Dendritic cell treated with granulocyte-macrophage colony-stimulating factor and Interleukin-4, amounts not matched to agents 40 ng/mL and 50 ng/mL, for 4 days (primary cell): ENCODE measurements at regions of chr5 and their contacts with region 1.

Region 1: GRCh38 chr5:115475788-115476187 is 68.8 kb downstream of the FEM1C start:
- H3K4me3 Mint-ChIP-seq: no peak overlapping the region
- H3K27ac Mint-ChIP-seq: peak overlapping the region; percentile 89
- H3K4me1 Mint-ChIP-seq: peaks cover 79% of the 10 kb centered on the region
- H3K27me3 Mint-ChIP-seq: no peaks in the 10 kb centered on the region

Region 2: GRCh38 chr5:115398719-115399118 is 77.1 kb before region 1 on chr5:
- intact Hi-C with region 1: no loop called
- H3K4me3 Mint-ChIP-seq: no peak overlapping the region
- H3K27ac Mint-ChIP-seq: no peak overlapping the region
- H3K4me1 Mint-ChIP-seq: no peaks in the 10 kb centered on the region
- H3K27me3 Mint-ChIP-seq: peaks cover 10% of the 10 kb centered on the region

Region 3: GRCh38 chr5:115435778-115436712 is 39.7 kb before region 1 on chr5:
- intact Hi-C with region 1: no loop called
- H3K4me3 Mint-ChIP-seq: no peak overlapping the region
- H3K27ac Mint-ChIP-seq: no peak overlapping the region
- H3K4me1 Mint-ChIP-seq: peaks cover 5% of the 10 kb centered on the region
- H3K27me3 Mint-ChIP-seq: peaks cover 18% of the 10 kb centered on the region

Region 4: DNA sequence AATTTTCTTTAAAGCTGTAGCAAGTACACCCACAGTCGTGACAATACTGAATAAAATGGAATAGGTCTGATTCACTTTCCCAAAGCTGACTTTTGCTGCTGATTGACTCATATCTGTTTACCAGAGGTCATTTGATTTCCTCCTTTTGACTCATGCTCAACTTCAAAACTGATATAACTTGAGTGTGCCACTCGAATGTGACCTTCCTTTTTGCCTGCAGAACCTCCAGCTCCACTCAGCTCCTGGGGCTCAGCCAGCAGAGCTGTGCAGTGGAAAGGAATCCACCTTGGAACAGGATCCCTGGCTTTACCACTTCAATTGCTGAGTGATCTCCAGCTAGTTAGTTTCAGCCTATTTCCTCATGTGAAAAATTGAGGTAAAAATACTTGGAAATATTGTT is 15.3 kb before region 1 on chr5:
- intact Hi-C with region 1: loop called (anchors 2 kb)
- H3K4me3 Mint-ChIP-seq: no peak overlapping the region
- H3K27ac Mint-ChIP-seq: no peak overlapping the region
- H3K4me1 Mint-ChIP-seq: peaks cover 3% of the 10 kb centered on the region
- H3K27me3 Mint-ChIP-seq: no peaks in the 10 kb centered on the region

Region 5: DNA sequence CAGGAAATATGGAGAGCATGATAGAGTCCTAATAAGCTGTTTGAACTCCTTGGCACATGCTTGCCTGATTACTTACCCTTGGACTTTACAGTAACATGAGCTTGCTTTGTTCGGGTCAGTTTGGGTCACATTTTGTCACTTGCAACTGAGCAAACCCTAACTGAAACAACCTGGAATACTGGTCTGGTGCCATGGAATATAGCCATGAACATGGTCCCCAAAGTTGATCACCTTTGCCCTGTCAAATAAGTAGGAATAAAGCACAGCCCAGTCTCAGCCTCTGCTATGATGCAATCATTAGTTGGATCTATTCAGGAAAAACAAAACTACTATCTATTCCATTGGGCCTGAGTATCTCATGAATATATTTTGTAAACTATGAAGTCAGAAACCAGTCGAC is 322.5 kb after region 1 on chr5:
- intact Hi-C with region 1: no loop called
- H3K4me3 Mint-ChIP-seq: no peak overlapping the region
- H3K27ac Mint-ChIP-seq: no peak overlapping the region
- H3K4me1 Mint-ChIP-seq: no peaks in the 10 kb centered on the region
- H3K27me3 Mint-ChIP-seq: peaks cover 3% of the 10 kb centered on the region